ENCODE measurements at regions of chr2 and their contacts with region 1.

Region 1: DNA sequence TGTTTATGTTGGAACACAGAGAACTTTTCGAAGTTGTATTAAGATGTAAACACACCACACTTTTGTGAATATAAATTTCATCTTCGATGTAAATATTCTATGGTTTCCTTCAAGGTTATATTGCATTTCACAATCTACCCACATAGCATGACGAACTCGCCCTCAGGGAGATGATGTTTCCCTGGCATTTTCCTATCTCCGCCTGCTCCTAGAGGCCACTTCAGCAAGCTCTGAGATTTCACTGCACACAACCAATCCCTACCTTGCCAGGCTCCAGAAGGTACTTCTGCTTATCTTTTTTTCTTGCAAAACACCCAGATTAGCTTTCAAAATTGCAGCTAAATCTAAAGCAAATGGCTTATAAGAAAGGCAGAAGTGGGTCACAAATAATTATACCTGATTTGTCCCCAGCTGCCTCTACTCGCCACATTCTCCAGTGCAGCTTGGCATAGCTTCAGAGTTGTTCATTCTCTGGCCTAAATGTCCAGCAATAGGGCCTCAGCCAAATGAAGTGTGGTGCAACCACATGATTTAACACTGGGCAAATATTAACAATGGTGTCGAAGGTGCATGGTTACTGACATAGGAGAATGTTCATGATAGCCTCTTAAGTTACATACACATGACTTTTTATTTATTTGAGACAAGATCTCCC is 32.4 kb upstream of the MRPL19 start:
- H3K4me3 ChIP-seq: no peak overlapping the region
- H3K27ac ChIP-seq: no peak overlapping the region
- H3K4me1 ChIP-seq: no peaks in the 10 kb centered on the region
- CTCF ChIP-seq: no peak

Region 2: DNA sequence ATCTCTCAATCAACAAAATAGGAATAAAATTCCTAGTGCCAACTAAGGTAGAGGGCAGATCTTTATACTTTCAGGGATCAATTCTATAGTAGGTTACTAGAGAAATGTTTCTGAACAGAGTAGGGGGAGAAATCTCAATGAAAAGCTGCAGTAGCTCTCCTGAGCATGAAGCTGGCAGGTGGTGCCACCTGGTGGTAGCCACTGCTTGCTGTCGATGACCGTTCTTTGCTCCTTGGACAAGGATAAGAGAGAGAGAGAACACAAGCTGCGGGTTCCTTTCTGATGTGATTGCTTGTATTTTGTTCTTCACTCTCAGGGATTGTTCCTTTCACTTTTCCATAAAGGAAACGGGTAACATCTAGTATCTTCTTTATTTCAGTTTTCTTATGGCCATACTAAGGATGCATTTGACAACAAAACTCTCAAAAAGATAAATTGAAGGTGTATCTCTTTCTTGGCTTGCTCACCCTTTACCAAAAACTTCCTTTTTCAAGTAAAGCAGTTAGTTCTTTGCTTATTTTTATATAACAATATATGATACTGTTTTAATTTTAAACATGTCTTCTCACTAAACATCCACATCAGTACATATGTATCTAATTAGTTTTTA is 13.8 kb after region 1 on chr2:
- CTCF ChIA-PET with region 1: interaction called, 12 read pairs
- POLR2A ChIA-PET with region 1: no interaction called
- H3K4me3 ChIP-seq: no peak overlapping the region
- H3K27ac ChIP-seq: no peak overlapping the region
- H3K4me1 ChIP-seq: no peaks in the 10 kb centered on the region
- CTCF ChIP-seq: peak; percentile 61; the same call in 1 of the 2 replicates

Region 3: GRCh38 chr2:75688196-75688595 is 74.0 kb after region 1 on chr2:
- CTCF ChIA-PET with region 1: no interaction called
- POLR2A ChIA-PET with region 1: no interaction called
- H3K4me3 ChIP-seq: no peak overlapping the region
- H3K27ac ChIP-seq: no peak overlapping the region
- H3K4me1 ChIP-seq: no peaks in the 10 kb centered on the region
- CTCF ChIP-seq: no peak

Region 4: DNA sequence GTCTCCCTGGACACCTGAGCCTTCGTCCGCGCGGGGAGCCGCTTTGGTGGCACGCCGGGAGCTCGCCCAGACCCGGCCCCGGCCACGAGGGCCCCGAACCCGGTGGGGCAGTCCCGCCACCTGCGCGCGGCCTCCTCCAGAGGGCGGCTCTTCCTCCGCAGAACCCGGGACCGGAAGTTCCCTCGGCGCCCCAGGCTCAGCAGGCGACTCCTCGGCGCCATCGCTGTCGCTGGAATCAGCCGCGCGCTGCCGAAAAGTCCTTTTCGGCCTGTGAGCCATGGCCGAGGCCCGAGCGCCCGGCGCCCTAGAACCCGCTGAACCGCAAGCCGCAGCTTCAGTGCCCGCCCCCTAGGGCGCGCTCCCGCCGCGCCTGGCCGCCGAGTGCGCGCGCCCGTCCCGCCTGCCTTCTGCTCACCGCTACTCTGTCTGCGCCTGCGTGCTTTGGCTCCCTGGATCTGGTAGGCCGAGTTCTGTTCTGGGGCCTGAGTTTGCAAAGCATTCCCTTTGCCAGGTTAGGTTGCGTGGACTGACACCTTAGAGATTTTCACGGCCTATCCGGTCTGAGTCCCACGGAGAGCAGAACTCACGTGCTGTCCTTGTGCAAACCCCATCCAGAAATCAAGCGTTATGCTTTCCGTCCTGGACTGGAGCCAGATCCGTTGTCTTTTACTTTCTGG is 96.5 kb after region 1 on chr2 and contains the start of gene GCFC2:
- CTCF ChIA-PET with region 1: no interaction called
- POLR2A ChIA-PET with region 1: no interaction called
- H3K4me3 ChIP-seq: peak within 1 kb of the TSS; percentile 66
- H3K27ac ChIP-seq: peak within 1 kb of the TSS; percentile 98
- H3K4me1 ChIP-seq: peaks cover 4% of the 10 kb centered on the region
- CTCF ChIP-seq: peak; percentile 89